Mammary epithelial cell (primary cell): ENCODE measurements at regions of chr16 and their contacts with region 1.

Region 1: DNA sequence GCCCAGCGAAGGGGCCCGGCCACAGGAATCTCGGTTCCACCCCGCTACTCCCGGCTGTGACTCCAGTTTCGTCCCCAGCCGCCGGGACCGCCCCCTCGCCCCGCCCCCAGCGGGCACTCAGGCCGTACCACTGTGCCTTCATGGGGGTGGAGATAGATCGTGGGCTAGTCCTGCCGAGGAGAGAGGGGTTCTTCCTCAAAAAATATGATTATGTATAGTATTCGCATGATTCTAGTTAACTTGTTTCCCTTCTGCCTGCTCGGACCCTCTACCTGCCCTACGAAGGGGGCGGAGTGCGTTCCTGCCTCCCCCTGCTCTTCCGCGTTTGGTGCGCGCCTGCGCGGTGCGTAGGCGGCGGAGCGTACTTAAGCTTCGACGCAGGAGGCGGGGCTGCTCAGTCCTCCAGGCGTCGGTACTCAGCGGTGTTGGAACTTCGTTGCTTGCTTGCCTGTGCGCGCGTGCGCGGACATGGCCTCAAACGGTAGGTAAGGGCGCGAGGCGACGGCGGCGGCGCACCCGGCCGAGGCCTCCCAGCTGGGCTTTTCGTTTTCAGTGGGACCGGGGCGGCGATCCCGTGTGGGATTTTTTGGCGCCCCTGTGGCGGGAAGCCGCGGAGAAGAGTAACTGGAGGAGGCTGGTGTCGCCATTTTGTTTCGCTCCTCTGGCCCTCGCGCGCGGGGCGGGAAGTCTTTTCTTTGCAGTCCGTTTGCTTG is at the start of gene FUS:
- DNase-seq: peak; percentile 79
- H3K4me3 ChIP-seq: peak within 1 kb of the TSS; percentile 62 to 95 (median 75)
- H3K27ac ChIP-seq: peak within 1 kb of the TSS; percentile 95
- H3K4me1 ChIP-seq: peaks cover 27% of the 10 kb centered on the region
- H3K27me3 ChIP-seq: no peaks in the 10 kb centered on the region
- CTCF ChIP-seq: no peak
- total RNA-seq, gene FUS: 19.5 to 404 TPM

Region 2: GRCh38 chr16:31094424-31095120 is 85.3 kb before region 1 on chr16 and contains the start of gene VKORC1:
- CTCF ChIA-PET with region 1: no interaction called
- dilution Hi-C with region 1: no loop called
- in situ Hi-C with region 1: no loop called
- intact Hi-C with region 1: loop called (anchors 5 kb)
- DNase-seq: peak; percentile 99
- H3K4me3 ChIP-seq: peak within 1 kb of the TSS; percentile 57 to 98 (median 71)
- H3K27ac ChIP-seq: peak within 1 kb of the TSS; percentile 81
- H3K4me1 ChIP-seq: peaks cover 4% of the 10 kb centered on the region
- H3K27me3 ChIP-seq: no peaks in the 10 kb centered on the region
- CTCF ChIP-seq: no peak
- total RNA-seq, gene VKORC1: 45.7 to 65.0 TPM

Region 3: DNA sequence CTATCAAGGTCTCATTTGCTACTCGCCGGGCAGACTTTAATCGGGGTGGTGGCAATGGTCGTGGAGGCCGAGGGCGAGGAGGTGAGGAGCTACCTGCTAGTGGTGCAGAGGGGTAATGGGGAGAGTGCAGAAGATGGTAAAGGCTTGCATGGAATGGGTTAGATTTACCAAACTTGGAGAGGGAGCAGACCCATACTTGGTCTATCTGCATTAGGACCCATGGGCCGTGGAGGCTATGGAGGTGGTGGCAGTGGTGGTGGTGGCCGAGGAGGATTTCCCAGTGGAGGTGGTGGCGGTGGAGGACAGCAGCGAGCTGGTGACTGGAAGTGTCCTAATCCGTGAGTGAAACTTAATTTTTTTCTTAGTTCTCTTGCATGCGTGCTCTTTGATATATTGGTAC is 10.2 kb after region 1 on chr16:
- CTCF ChIA-PET with region 1: no interaction called
- dilution Hi-C with region 1: no loop called
- in situ Hi-C with region 1: no loop called
- intact Hi-C with region 1: loop called (anchors 1 kb)
- DNase-seq: no peak
- H3K4me3 ChIP-seq: no peak overlapping the region
- H3K27ac ChIP-seq: no peak overlapping the region
- H3K4me1 ChIP-seq: no peaks in the 10 kb centered on the region
- H3K27me3 ChIP-seq: no peaks in the 10 kb centered on the region
- CTCF ChIP-seq: no peak

Region 4: GRCh38 chr16:31505483-31505882 is 325.6 kb after region 1 on chr16:
- CTCF ChIA-PET with region 1: no interaction called
- dilution Hi-C with region 1: no loop called
- in situ Hi-C with region 1: no loop called
- intact Hi-C with region 1: no loop called
- DNase-seq: no peak
- H3K4me3 ChIP-seq: no peak overlapping the region
- H3K27ac ChIP-seq: no peak overlapping the region
- H3K4me1 ChIP-seq: peaks cover 6% of the 10 kb centered on the region
- H3K27me3 ChIP-seq: no peaks in the 10 kb centered on the region
- CTCF ChIP-seq: no peak